ENCODE measurements at regions of chr6 and their contacts with region 1.

Region 1: GRCh38 chr6:53014063-53014462 is 19.0 kb upstream of the GSTA4 start:
- DNase-seq: no peak
- ATAC-seq: peak; percentile 84
- H3K4me3 ChIP-seq: no peak overlapping the region
- H3K27ac ChIP-seq: peak overlapping the region; percentile 92 to 93
- H3K4me1 ChIP-seq: peaks cover 2 to 4% of the 10 kb centered on the region in 2 donors
- H3K27me3 ChIP-seq: no peaks in the 10 kb centered on the region

Region 2: GRCh38 chr6:53042112-53042511 is 28.0 kb after region 1 on chr6:
- intact Hi-C with region 1: loop called in 1 of 2 experiments (anchors 2 kb)
- DNase-seq: no peak
- ATAC-seq: peak; percentile 69
- H3K4me3 ChIP-seq: no peak overlapping the region
- H3K27ac ChIP-seq: no peak overlapping the region
- H3K4me1 ChIP-seq: peaks cover 5 to 11% of the 10 kb centered on the region in 2 donors
- H3K27me3 ChIP-seq: no peaks in the 10 kb centered on the region

Region 3: GRCh38 chr6:53064726-53065215 is 50.7 kb after region 1 on chr6:
- intact Hi-C with region 1: loop called in 1 of 2 experiments (anchors 5 kb)
- DNase-seq: peak; percentile 97 to 99
- ATAC-seq: peak; percentile 95
- H3K4me3 ChIP-seq: peak overlapping the region; percentile 82 to 90
- H3K27ac ChIP-seq: peak overlapping the region; percentile 15 to 79
- H3K4me1 ChIP-seq: peaks cover 0 to 5% of the 10 kb centered on the region in 2 donors
- H3K27me3 ChIP-seq: no peaks in the 10 kb centered on the region

Measured in aorta (tissue), 5 donors.